Body of pancreas (tissue), 4 donors: ENCODE measurements at regions of chr3 and their contacts with region 1.

Region 1: GRCh38 chr3:124584552-124585391 is 145.5 kb upstream of the UMPS start:
- DNase-seq: peak; percentile 91 to 95 (median 92)
- ATAC-seq: peak; percentile 95
- H3K4me3 ChIP-seq: peak overlapping the region; percentile 42 to 71
- H3K27ac ChIP-seq: peak overlapping the region; percentile 59 to 89 (median 85)
- H3K4me1 ChIP-seq: peaks cover 36% of the 10 kb centered on the region
- H3K27me3 ChIP-seq: no peaks in the 10 kb centered on the region
- CTCF ChIP-seq: peak in 4 of 7 experiments; percentile 11 to 21 (median 16)
- POLR2A ChIP-seq: peak; percentile 87 to 88 (median 87)

Region 2: GRCh38 chr3:124599779-124600609 is 15.2 kb after region 1 on chr3:
- intact Hi-C with region 1: no loop called
- DNase-seq: peak in 2 of 4 donors; percentile 35 to 36
- ATAC-seq: peak; percentile 65
- H3K4me3 ChIP-seq: no peak overlapping the region
- H3K27ac ChIP-seq: peak overlapping the region in 1 of 4 donors; percentile 24
- H3K4me1 ChIP-seq: peaks cover 66% of the 10 kb centered on the region
- H3K27me3 ChIP-seq: no peaks in the 10 kb centered on the region
- CTCF ChIP-seq: no peak
- POLR2A ChIP-seq: no peak

Region 3: GRCh38 chr3:124639406-124640237 is 54.9 kb after region 1 on chr3:
- intact Hi-C with region 1: loop called (anchors 10 kb)
- DNase-seq: no peak
- ATAC-seq: no peak
- H3K4me3 ChIP-seq: no peak overlapping the region
- H3K27ac ChIP-seq: no peak overlapping the region
- H3K4me1 ChIP-seq: peaks cover 30% of the 10 kb centered on the region
- H3K27me3 ChIP-seq: no peaks in the 10 kb centered on the region
- CTCF ChIP-seq: no peak
- POLR2A ChIP-seq: no peak